Activated CD4-positive, alpha-beta T cell treated with anti-CD3 and anti-CD28 coated beads for 36 hours (primary cell): ENCODE measurements at regions of chr14 and their contacts with region 1.

Region 1: DNA sequence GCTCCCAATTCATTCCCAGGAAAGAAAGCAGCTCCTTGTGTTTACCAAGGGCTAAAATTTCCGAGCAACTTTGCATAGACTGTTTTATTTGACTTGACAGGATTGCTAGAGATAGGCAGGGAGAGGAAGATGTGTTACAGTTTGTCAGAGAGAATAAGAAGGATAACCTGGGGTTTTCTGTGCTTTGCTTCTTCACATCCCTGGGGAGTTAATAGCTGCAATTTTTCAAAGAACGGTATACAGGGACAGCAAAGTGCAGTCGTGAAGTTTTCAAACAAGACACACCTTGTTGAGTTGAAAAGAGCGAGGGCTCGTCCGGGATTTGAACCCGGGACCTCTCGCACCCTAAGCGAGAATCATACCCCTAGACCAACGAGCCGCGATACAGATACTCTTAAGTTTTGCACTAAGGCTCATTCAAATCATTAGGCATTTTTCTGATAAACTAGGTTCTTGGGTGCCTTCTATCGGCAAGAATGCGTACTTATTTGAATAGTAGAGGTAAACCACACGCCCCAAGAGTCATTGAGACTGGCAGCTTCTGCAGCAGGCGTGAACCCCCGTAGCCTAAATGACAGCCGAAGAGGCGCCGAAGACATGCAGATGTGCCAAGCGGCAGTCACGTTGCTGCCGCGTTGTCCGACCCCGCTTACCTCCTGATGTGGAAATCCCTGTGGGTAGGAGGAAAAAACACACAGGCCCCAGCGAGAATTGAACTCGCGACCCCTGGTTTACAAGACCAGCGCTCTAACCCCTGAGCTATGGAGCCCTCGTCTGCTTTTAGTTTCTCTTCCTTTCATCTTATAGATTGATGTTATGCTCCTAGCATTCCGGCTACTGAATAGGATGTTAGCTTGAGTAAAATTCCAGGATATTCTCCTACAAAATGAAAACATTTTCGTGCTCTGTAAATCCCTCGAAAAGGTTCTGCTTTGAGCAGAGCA is 22.2 kb upstream of the RNASE12 start:
- DNase-seq: peak; percentile 91
- ATAC-seq: peak; percentile 87
- H3K4me3 Mint-ChIP-seq: no peak overlapping the region
- H3K27ac Mint-ChIP-seq: no peak overlapping the region
- H3K4me1 Mint-ChIP-seq: peaks cover 8% of the 10 kb centered on the region
- H3K27me3 Mint-ChIP-seq: no peaks in the 10 kb centered on the region

Region 2: DNA sequence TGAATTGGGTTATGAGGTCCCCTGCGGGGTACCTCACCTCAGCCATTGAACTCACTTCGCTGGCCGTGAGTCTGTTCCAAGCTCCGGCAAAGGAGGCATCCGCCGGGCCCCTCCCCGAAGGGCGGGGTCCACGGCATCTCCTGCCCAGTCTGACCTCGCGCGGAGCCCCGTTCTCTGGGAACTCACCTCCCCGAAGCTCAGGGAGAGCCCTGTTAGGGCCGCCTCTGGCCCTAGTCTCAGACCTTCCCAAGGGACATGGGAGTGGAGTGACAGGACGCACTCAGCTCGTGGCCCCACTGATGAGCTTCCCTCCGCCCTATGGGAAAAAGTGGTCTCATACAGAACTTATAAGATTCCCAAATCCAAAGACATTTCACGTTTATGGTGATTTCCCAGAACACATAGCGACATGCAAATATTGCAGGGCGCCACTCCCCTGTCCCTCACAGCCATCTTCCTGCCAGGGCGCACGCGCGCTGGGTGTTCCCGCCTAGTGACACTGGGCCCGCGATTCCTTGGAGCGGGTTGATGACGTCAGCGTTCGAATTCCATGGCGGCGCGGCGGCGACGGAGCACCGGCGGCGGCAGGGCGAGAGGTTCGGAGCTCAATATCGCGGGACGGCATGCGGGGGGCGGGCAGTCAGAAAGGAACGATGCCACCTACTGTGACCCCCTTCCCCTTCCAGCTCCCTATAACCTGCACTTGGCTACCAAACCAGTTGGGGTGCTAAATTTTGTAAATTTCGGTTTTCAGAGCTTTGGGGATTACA is 270.1 kb before region 1 on chr14 and contains the start of gene PARP2:
- CTCF ChIA-PET with region 1: interaction called, 11 read pairs
- POLR2A ChIA-PET with region 1: interaction called, 5 read pairs
- intact Hi-C with region 1: loop called (anchors 1 kb)
- DNase-seq: peak; percentile 97
- ATAC-seq: peak; percentile 95
- H3K4me3 Mint-ChIP-seq: peak within 1 kb of the TSS; percentile 89
- H3K27ac Mint-ChIP-seq: peak within 1 kb of the TSS; percentile 92
- H3K4me1 Mint-ChIP-seq: peaks cover 20% of the 10 kb centered on the region
- H3K27me3 Mint-ChIP-seq: no peaks in the 10 kb centered on the region
- total RNA-seq, gene PARP2: 39.4 to 41.8 TPM

Region 3: GRCh38 chr14:20387576-20387975 is 225.8 kb before region 1 on chr14:
- CTCF ChIA-PET with region 1: no interaction called
- POLR2A ChIA-PET with region 1: no interaction called
- intact Hi-C with region 1: no loop called
- DNase-seq: no peak
- ATAC-seq: no peak
- H3K4me3 Mint-ChIP-seq: no peak overlapping the region
- H3K27ac Mint-ChIP-seq: no peak overlapping the region
- H3K4me1 Mint-ChIP-seq: no peaks in the 10 kb centered on the region
- H3K27me3 Mint-ChIP-seq: no peaks in the 10 kb centered on the region

Region 4: DNA sequence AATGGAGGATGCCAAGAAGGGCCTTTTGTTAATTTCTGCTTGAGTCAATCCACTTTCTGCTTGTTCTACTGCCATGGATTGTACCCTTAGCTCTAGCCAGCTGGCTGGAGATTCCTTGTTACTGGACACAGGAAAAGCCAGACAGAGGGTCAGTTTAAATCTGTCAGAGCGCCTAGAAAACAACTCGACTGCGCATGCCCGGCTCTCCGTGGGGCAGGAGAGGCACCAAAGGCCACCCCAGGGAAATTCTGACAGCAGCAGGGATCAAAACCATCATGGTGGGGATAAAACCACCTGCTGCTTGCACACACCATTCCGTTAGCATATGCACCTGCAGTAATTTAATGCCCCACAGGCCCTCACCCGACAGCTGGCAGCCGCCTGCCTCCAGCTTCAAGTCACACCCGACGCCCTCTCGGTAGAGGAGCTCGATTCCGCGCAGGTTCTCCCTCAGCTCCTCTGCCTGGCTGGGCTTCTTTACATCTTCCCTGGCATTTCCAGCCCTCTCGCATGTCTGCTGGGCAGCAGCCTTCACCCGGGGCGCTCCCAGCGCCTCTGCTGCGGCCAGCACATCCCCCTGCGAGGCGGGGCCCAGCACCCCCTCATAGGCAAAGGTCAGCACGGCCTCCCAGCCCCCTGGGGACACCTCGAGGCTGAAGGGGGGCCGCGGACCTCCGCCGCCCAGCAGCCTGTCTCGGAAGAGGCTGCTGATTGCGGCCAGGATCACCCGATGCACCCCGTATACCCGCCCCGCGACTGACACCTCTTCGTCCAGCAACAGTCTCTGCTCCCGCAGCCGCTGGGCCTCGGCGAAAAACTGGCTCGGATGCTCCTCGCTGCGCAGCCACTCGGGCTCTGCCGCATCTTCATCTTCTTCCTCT is 178.4 kb before region 1 on chr14:
- CTCF ChIA-PET with region 1: no interaction called
- POLR2A ChIA-PET with region 1: no interaction called
- intact Hi-C with region 1: no loop called
- DNase-seq: no peak
- ATAC-seq: no peak
- H3K4me3 Mint-ChIP-seq: no peak overlapping the region
- H3K27ac Mint-ChIP-seq: no peak overlapping the region
- H3K4me1 Mint-ChIP-seq: peaks cover under 1% of the 10 kb centered on the region
- H3K27me3 Mint-ChIP-seq: no peaks in the 10 kb centered on the region

Region 5: DNA sequence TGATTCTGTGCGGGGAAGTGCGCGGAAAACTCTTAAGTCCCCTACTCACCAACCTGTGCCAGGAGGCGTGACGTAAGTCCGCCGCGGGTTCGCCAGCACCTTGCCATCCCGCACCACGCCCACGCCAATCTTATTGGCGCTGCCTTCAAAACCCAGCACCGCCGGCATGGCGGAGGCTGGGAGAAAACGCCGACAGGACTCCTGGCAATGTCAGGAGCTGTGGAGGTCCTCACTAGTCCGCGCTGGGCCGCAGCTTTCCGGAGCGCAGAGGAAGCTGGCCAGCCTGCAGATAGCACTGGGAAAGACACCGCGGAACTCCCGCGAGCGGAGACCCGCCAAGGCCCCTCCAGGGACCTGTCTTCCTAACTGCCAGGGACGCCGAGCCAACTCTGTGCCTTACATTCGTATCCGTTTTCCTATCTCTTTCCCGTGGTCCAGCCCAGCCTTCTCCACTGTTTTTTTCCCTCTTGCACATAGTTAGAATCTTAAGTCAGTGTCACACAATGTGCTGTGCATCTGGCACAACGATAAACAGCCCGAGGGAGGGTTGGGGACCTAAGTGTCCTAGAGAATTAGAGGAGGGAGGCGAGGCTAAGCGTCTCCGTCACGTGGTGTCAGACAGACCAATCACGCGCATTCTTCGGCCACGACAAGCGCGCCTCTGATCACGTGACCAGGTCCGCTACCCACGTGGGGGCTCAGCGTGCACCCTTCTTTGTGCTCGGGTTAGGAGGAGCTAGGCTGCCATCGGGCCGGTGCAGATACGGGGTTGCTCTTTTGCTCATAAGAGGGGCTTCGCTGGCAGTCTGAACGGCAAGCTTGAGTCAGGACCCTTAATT is 158.6 kb before region 1 on chr14 and contains the starts of genes APEX1 and OSGEP:
- CTCF ChIA-PET with region 1: interaction called, 5 read pairs
- POLR2A ChIA-PET with region 1: interaction called, 3 read pairs
- intact Hi-C with region 1: loop called (anchors 1 kb)
- DNase-seq: peak; percentile 99
- ATAC-seq: peak; percentile 89
- H3K4me3 Mint-ChIP-seq: no peak within 1 kb of the TSS
- H3K27ac Mint-ChIP-seq: no peak within 1 kb of the TSS
- H3K4me1 Mint-ChIP-seq: peaks cover 18% of the 10 kb centered on the region
- H3K27me3 Mint-ChIP-seq: no peaks in the 10 kb centered on the region
- total RNA-seq, gene APEX1: 216 to 257 TPM
- total RNA-seq, gene OSGEP: 46.2 to 47.5 TPM

Region 6: GRCh38 chr14:20530771-20531571 is 82.4 kb before region 1 on chr14:
- CTCF ChIA-PET with region 1: interaction called, 16 read pairs
- POLR2A ChIA-PET with region 1: no interaction called
- intact Hi-C with region 1: loop called (anchors 1 to 2 kb)
- DNase-seq: peak; percentile 87
- ATAC-seq: peak; percentile 89
- H3K4me3 Mint-ChIP-seq: peak overlapping the region; percentile 32
- H3K27ac Mint-ChIP-seq: no peak overlapping the region
- H3K4me1 Mint-ChIP-seq: peaks cover 7% of the 10 kb centered on the region
- H3K27me3 Mint-ChIP-seq: peaks cover 9% of the 10 kb centered on the region

Region 7: DNA sequence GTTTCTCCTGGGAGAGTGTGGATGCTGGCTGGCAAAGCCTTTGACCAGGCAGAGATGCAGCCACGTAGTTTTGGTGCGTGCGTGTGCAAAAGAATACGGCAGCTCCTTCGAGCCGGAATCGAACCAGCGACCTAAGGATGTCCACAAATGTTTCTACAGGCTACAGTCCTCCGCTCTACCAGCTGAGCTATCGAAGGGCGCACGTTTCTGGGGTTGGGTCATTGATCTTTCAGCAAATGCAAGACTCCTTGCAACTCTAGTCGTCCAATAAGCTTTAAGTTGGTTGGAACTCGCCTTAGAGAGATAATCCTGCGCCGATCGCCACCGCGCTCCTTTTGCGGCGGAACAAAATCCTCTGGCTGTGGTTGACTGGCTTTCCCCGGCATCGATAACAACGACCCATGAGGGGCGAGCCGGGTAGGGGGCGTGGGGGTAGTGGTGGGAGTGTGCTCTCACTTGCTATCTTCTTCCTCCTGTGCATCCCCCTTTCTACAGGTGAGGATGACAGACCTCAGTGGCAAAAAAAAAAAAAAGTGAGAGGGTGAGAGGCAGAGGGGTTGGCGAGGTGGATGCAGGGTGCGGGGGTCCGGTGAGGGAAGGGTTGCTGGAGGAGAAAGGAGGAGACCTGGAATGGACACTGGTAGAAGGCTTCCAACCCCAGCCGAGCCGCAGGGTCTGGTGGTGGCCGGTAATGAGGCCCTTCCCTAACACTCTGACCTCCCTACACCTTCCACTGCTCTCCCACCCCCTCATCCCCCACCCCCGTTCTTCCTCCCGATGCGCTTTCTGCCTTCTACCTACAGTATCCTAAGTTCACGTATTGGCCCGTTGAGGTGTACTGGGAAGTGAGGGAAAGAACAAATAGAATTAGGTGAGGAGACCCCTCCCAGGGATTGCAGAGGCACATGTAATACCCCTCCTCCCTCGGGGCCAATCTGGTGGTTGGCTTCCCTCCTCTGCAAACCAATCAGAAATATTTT is 39.9 kb after region 1 on chr14:
- CTCF ChIA-PET with region 1: interaction called, 6 read pairs
- POLR2A ChIA-PET with region 1: no interaction called
- intact Hi-C with region 1: loop called (anchors 1 to 2 kb)
- DNase-seq: peak; percentile 86
- ATAC-seq: peak; percentile 88
- H3K4me3 Mint-ChIP-seq: peak overlapping the region; percentile 66
- H3K27ac Mint-ChIP-seq: no peak overlapping the region
- H3K4me1 Mint-ChIP-seq: peaks cover 16% of the 10 kb centered on the region
- H3K27me3 Mint-ChIP-seq: peaks cover 56% of the 10 kb centered on the region

Region 8: GRCh38 chr14:20690848-20691523 is 77.6 kb after region 1 on chr14:
- CTCF ChIA-PET with region 1: interaction called, 9 read pairs
- POLR2A ChIA-PET with region 1: no interaction called
- intact Hi-C with region 1: loop called (anchors 1 kb)
- DNase-seq: peak; percentile 49
- ATAC-seq: peak; percentile 83
- H3K4me3 Mint-ChIP-seq: no peak overlapping the region
- H3K27ac Mint-ChIP-seq: peak overlapping the region; percentile 19
- H3K4me1 Mint-ChIP-seq: peaks cover 12% of the 10 kb centered on the region
- H3K27me3 Mint-ChIP-seq: no peaks in the 10 kb centered on the region